ENCODE measurements at regions of chr5 and their contacts with region 1.

Region 1: GRCh38 chr5:35129918-35130485 is 82.3 kb upstream of the AGXT2 start:
- DNase-seq: peak; percentile 80
- ATAC-seq: peak; percentile 99
- H3K4me3 Mint-ChIP-seq: no peak overlapping the region
- H3K27ac Mint-ChIP-seq: no peak overlapping the region
- H3K4me1 Mint-ChIP-seq: peaks cover 21% of the 10 kb centered on the region
- H3K27me3 Mint-ChIP-seq: peaks cover 67% of the 10 kb centered on the region

Region 2: GRCh38 chr5:35030426-35031100 is 99.4 kb before region 1 on chr5:
- CTCF ChIA-PET with region 1: no interaction called
- POLR2A ChIA-PET with region 1: no interaction called
- intact Hi-C with region 1: no loop called
- DNase-seq: no peak
- ATAC-seq: no peak
- H3K4me3 Mint-ChIP-seq: no peak overlapping the region
- H3K27ac Mint-ChIP-seq: no peak overlapping the region
- H3K4me1 Mint-ChIP-seq: no peaks in the 10 kb centered on the region
- H3K27me3 Mint-ChIP-seq: peaks cover 21% of the 10 kb centered on the region

Region 3: GRCh38 chr5:35058374-35058788 is 71.6 kb before region 1 on chr5:
- CTCF ChIA-PET with region 1: no interaction called
- POLR2A ChIA-PET with region 1: no interaction called
- intact Hi-C with region 1: loop called in 1 of 2 experiments (anchors 1 kb)
- DNase-seq: peak; percentile 5
- ATAC-seq: peak; percentile 87
- H3K4me3 Mint-ChIP-seq: no peak overlapping the region
- H3K27ac Mint-ChIP-seq: no peak overlapping the region
- H3K4me1 Mint-ChIP-seq: peaks cover 9% of the 10 kb centered on the region
- H3K27me3 Mint-ChIP-seq: peaks cover 39% of the 10 kb centered on the region

Region 4: GRCh38 chr5:35319333-35320002 is 189.5 kb after region 1 on chr5:
- CTCF ChIA-PET with region 1: no interaction called
- POLR2A ChIA-PET with region 1: no interaction called
- intact Hi-C with region 1: loop called (anchors 1 to 2 kb)
- DNase-seq: peak; percentile 92
- ATAC-seq: peak; percentile 91
- H3K4me3 Mint-ChIP-seq: no peak overlapping the region
- H3K27ac Mint-ChIP-seq: no peak overlapping the region
- H3K4me1 Mint-ChIP-seq: peaks cover 30% of the 10 kb centered on the region
- H3K27me3 Mint-ChIP-seq: peaks cover 14% of the 10 kb centered on the region